Activated CD8-positive, alpha-beta memory T cell treated with anti-CD3 and anti-CD28 coated beads, Interleukin-2, amount 10 ng/mL, durations not matched to agents 7 days and 5 days (primary cell): ENCODE measurements at regions of chr21 and their contacts with region 1.

Region 1: GRCh38 chr21:34615487-34615814 is 538 bp upstream of the RCAN1 start:
- DNase-seq: no peak
- ATAC-seq: no peak
- H3K4me3 Mint-ChIP-seq: peak overlapping the region; percentile 80
- H3K27ac Mint-ChIP-seq: peak overlapping the region; percentile 83
- H3K4me1 Mint-ChIP-seq: peaks cover 20% of the 10 kb centered on the region
- H3K27me3 Mint-ChIP-seq: peaks cover 20% of the 10 kb centered on the region

Region 2: DNA sequence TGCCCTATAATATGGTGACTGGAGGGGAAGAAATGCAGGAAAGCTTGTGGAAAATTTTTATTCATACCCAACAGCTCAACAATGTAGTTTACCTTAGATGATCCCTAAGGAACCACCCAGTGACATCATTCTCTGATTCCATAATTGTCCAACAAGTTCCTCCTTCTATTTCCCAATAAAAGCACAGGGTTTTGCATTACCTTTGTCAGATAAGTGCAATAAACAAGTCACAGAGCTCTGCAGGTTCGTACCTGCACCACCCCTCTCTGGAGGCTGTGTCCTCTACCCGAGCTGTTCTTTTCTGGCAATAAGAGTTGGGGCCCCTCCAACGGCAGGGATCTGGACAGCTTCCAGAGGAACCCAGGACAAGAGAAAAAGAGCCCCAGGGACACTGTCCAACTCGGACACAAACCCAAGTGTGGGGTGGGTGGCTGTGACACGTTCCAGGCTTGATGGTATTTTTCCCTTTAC is 39.4 kb before region 1 on chr21:
- CTCF ChIA-PET with region 1: no interaction called
- DNase-seq: no peak
- ATAC-seq: no peak
- H3K4me3 Mint-ChIP-seq: no peak overlapping the region
- H3K27ac Mint-ChIP-seq: no peak overlapping the region
- H3K4me1 Mint-ChIP-seq: peaks cover 9% of the 10 kb centered on the region
- H3K27me3 Mint-ChIP-seq: no peaks in the 10 kb centered on the region

Region 3: DNA sequence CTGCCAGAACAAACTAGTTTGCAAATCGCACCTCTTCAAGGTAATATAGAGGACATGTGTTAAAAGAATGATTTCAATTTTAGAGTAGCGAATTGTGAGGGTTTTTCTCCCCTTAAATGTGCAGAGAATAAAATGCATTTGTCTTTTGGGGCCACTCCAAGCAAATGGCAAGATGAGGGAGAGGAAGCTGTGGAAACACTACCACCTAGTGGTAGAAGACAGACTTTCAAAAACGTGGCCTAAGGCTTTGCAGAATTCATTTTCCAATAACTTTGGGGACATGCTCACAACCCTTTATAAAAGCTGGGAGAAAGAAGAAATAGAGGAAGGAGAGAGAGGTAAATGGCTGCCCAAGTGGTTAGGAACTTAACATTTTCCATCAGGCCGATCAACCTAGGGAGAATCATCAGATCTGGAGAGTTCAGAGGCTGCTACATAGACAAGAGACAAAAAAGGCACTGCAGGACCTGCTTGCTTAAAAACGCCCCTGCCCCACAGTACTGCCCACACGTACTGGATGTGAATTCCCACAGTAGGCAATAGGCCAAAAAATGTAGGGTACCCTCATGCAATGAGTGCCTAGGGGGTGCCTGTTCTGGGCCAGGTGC is 15.2 kb after region 1 on chr21:
- CTCF ChIA-PET with region 1: interaction called, 14 read pairs
- DNase-seq: no peak
- ATAC-seq: peak; percentile 70
- H3K4me3 Mint-ChIP-seq: no peak overlapping the region
- H3K27ac Mint-ChIP-seq: no peak overlapping the region
- H3K4me1 Mint-ChIP-seq: no peaks in the 10 kb centered on the region
- H3K27me3 Mint-ChIP-seq: peaks cover 26% of the 10 kb centered on the region

Region 4: DNA sequence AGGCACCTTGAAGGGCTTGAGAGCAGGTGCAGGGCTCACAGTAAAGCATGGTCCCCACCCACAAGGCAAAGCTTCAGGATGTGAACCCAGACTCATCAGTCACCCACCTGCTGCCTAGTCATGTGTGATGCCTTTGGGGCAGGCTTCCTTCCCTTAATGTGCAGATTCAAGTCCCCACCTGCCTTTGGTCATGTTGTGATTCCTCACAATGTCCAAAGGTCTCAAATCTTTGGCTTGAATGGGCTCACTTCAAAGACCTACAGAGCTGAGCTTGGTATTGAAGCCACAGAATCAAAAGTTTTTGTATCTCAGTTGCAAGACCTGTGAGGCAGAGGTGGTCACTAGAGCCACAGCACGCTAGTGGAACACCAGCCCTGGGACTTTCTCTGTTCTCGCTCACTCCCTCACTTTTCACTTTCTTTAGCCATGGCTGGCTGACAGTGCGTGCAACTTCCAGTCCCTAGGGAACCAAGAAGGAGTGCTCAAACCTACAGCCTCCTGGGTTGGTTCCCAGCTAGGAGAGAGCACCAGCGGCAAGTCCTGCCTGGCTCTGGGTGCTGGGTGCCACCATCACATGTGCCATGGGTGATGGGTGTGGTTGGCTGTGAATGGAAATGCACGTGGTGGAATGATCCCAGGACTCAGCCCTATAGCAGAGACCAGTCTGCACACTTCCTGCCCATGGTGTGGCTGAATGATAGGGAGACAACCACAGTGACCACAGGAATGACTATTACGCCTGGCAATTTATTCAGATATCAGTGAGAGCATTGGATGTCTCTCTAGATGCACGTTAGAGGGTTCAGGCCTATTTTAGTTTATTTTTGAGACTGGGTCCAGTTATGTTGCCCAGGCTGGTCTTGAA is 27.0 kb after region 1 on chr21:
- CTCF ChIA-PET with region 1: no interaction called
- DNase-seq: no peak
- ATAC-seq: no peak
- H3K4me3 Mint-ChIP-seq: no peak overlapping the region
- H3K27ac Mint-ChIP-seq: no peak overlapping the region
- H3K4me1 Mint-ChIP-seq: peaks cover 47% of the 10 kb centered on the region
- H3K27me3 Mint-ChIP-seq: no peaks in the 10 kb centered on the region